ENCODE measurements at regions of chr21 and their contacts with region 1.

Region 1: DNA sequence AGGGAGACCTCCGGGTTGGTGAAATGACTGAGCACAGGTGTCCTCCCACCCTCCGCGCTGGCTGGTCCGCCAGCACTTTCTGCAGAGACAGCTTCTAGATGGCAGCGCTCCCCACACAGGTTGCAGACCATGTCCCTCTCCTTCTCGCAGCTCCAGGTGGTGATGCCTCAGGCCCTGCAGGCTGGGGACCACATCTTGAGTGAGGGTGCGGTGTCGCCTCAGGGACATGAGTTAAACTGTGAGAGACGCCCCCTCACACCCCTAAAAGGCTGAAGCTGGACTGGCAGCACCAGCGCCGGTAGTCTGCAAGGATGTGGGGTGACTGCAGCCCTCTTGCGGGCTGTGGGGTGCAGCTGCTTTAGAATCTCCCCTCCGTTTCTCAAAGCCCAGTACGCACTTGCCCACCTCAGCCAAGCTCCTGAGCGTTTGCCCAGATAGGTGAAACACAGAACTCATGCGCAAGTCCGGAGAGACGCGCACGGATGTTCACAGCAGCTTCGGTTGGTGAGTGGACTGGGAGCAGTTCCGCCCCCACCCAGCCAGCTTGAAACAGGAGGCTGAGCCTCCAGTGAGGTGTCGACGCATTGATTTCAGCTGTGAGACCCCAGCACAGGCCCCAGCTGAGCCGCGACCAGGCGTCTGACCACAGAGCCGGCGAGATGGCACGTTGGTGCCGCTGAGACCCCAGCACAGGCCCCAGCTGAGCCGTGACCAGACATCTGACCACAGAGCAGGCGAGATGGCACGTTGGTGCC is 28.6 kb downstream of the COL6A1 start:
- DNase-seq: peak in 1 of 14 experiments; percentile 3
- ATAC-seq: no peak
- H3K4me3 ChIP-seq: no peak overlapping the region
- H3K4me3 Mint-ChIP-seq: no peak overlapping the region
- H3K27ac ChIP-seq: no peak overlapping the region
- H3K27ac Mint-ChIP-seq: no peak overlapping the region
- H3K4me1 ChIP-seq: no peaks in the 10 kb centered on the region
- H3K4me1 Mint-ChIP-seq: no peaks in the 10 kb centered on the region
- H3K27me3 ChIP-seq: peaks cover 0 to 3% of the 10 kb centered on the region in 2 experiments
- H3K27me3 Mint-ChIP-seq: peaks cover 4% of the 10 kb centered on the region
- CTCF ChIP-seq: no peak

Region 2: GRCh38 chr21:45949928-45950733 is 60.0 kb before region 1 on chr21:
- CTCF ChIA-PET with region 1: no interaction called
- POLR2A ChIA-PET with region 1: no interaction called
- intact Hi-C with region 1: loop called in 1 of 2 experiments (anchors 10 kb)
- DNase-seq: no peak
- ATAC-seq: no peak
- H3K4me3 ChIP-seq: no peak overlapping the region
- H3K4me3 Mint-ChIP-seq: no peak overlapping the region
- H3K27ac ChIP-seq: no peak overlapping the region
- H3K27ac Mint-ChIP-seq: no peak overlapping the region
- H3K4me1 ChIP-seq: no peaks in the 10 kb centered on the region
- H3K4me1 Mint-ChIP-seq: no peaks in the 10 kb centered on the region
- H3K27me3 ChIP-seq: peaks cover 0 to 2% of the 10 kb centered on the region in 2 experiments
- H3K27me3 Mint-ChIP-seq: peaks cover 7% of the 10 kb centered on the region
- CTCF ChIP-seq: no peak

Measured in CD4-positive, alpha-beta T cell (primary cell).